ENCODE measurements at regions of chr1 and their contacts with region 1.

Region 1: DNA sequence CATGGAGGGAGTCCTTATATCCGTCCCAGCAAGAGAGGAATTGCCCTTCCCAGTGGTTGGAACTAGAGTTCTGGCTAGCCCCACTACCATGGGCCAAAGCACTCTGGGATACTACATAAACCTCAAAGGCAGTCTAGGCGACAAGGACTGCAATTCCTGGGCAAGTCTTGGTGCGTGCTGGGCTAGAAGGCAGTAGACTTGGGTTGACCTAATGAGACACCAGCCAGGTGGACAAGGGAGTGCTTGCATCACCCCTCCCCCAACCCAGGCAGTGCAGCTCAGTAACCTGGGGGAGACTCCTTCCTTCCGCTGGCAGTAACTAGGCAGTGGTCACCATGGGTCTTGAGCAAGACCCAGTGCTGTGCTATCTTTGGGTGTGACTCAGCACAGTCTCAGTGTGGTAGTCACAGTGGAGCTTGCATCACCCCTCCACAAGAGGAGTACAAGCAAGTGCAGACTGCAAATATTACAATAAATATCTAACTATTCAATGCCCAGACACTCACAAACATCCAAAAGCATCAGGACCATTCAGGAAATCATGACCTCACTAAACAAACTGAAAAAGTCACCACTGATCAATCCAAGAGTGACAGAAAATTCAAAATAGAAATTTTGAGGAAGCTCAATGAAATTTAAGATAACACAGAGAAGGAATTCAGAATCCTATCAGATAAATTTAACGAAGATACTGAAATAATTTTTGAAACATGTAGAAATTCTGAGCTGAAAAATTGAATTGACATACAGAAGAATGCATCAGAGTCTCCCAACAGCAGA is 84.7 kb upstream of the LYPLAL1 start:
- DNase-seq: peak; percentile 100
- ATAC-seq: peak; percentile 98
- H3K4me3 ChIP-seq: 0 out of 2 replicates have a peak overlapping the region, but pooled peaks have one; percentile 3
- H3K27ac ChIP-seq: peak overlapping the region; percentile 52
- H3K4me1 ChIP-seq: peaks cover 85% of the 10 kb centered on the region
- H3K27me3 ChIP-seq: no peaks in the 10 kb centered on the region
- CTCF ChIP-seq: no peak

Region 2: DNA sequence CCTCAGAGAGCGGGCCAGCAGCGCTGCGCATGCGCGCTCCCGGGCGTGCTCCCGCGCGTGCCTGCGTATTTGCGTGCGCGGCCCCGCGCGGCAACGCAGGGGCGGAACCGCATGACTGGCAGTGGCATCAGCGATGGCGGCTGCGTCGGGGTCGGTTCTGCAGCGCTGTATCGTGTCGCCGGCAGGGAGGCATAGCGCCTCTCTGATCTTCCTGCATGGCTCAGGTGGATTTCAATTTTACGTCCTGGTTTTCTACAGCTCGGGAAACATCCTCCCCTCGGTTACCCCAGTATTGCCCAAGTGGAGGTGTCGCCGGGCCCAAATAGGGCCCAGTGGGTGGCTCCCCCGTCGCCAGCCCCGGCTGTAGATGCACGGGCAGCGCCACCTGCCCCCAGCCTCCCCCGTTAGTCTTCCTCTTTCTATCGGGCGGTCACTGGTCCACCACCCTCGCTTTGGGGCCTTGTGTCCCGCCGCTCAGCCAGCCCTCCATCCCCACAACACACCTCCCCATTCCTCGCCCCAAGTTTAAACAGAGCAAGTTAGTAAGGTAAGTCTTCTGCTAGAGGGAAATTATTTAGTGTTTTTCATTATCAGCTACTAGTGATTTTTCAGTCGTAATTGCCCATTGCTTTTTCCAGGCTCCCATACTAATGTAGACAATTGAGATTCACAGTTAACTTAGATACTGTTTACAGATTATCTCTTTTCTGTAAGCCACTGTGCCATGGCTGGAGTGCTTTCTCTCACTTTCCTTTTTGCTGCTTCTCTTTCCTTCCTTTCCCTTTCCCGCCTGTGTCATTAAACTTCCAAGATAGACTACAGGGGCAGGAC is 85.0 kb after region 1 on chr1 and contains the start of gene LYPLAL1:
- CTCF ChIA-PET with region 1: no interaction called
- POLR2A ChIA-PET with region 1: no interaction called
- intact Hi-C with region 1: loop called (anchors 5 kb)
- DNase-seq: peak; percentile 98
- ATAC-seq: peak; percentile 75
- H3K4me3 ChIP-seq: peak within 1 kb of the TSS; percentile 69
- H3K27ac ChIP-seq: peak within 1 kb of the TSS; percentile 23
- H3K4me1 ChIP-seq: peaks cover 47% of the 10 kb centered on the region
- H3K27me3 ChIP-seq: no peaks in the 10 kb centered on the region
- CTCF ChIP-seq: peak; percentile 51; the same call in 1 of the 2 replicates
- total RNA-seq, gene LYPLAL1: 15.8 and 21.3 TPM in 2 replicates

Region 3: GRCh38 chr1:219279017-219279770 is 190.2 kb after region 1 on chr1:
- CTCF ChIA-PET with region 1: no interaction called
- POLR2A ChIA-PET with region 1: no interaction called
- intact Hi-C with region 1: loop called (anchors 5 kb)
- DNase-seq: peak; percentile 99
- ATAC-seq: peak; percentile 91
- H3K4me3 ChIP-seq: no peak overlapping the region
- H3K27ac ChIP-seq: peak overlapping the region; percentile 77
- H3K4me1 ChIP-seq: peaks cover 38% of the 10 kb centered on the region
- H3K27me3 ChIP-seq: no peaks in the 10 kb centered on the region
- CTCF ChIP-seq: no peak

Region 4: GRCh38 chr1:219317762-219318353 is 228.9 kb after region 1 on chr1:
- CTCF ChIA-PET with region 1: no interaction called
- POLR2A ChIA-PET with region 1: no interaction called
- intact Hi-C with region 1: loop called (anchors 5 kb)
- DNase-seq: peak; percentile 82
- ATAC-seq: peak; percentile 59
- H3K4me3 ChIP-seq: no peak overlapping the region
- H3K27ac ChIP-seq: no peak overlapping the region
- H3K4me1 ChIP-seq: peaks cover 16% of the 10 kb centered on the region
- H3K27me3 ChIP-seq: no peaks in the 10 kb centered on the region
- CTCF ChIP-seq: peak; percentile 98

Region 5: GRCh38 chr1:219582296-219582695 is 493.3 kb after region 1 on chr1:
- CTCF ChIA-PET with region 1: interaction called, 3 read pairs
- POLR2A ChIA-PET with region 1: no interaction called
- intact Hi-C with region 1: loop called (anchors 5 kb)
- DNase-seq: peak; percentile 86
- ATAC-seq: 0 out of 2 replicates have a peak, but pooled peaks have one; percentile 8
- H3K4me3 ChIP-seq: 0 out of 2 replicates have a peak overlapping the region, but pooled peaks have one; percentile 5
- H3K27ac ChIP-seq: peak overlapping the region; percentile 28
- H3K4me1 ChIP-seq: peaks cover 37% of the 10 kb centered on the region
- H3K27me3 ChIP-seq: no peaks in the 10 kb centered on the region
- CTCF ChIP-seq: no peak

Measured in PC-3 (cell line).